Mammary epithelial cell (primary cell): ENCODE measurements at regions of chr2 and their contacts with region 1.

Region 1: DNA sequence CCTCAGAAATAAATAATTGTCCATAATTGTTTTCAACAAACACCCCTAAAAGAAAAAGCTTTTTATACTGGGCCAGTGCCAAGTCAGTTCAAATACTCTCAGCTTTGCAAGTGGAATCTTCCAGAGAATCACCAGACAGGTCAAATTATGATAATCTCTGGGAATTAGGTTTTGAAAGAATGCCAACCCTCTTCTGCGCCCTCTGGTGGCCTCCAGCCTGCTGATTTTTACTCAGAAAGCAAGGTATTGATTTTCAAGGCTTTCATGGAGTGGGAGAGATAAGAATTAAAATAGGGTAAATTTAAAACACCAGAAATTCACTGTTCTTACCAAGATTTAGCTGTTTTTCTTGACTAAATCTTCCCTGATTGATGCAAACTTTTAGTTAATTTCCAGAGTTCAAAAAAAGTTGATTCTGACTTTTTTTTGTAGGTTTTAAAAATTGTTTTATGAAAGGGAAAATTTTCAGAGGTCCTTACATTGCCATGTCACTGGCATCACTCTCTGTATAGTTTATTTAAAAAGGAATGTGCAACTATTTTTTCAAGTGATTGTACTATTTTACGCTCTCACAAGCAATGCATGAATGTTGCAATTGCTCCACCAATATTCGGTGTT is 282.9 kb upstream of the TNP1 start:
- DNase-seq: peak; percentile 17
- H3K4me3 ChIP-seq: no peak overlapping the region
- H3K27ac ChIP-seq: no peak overlapping the region
- H3K4me1 ChIP-seq: no peaks in the 10 kb centered on the region
- H3K27me3 ChIP-seq: no peaks in the 10 kb centered on the region
- CTCF ChIP-seq: peak; percentile 78 to 81

Region 2: DNA sequence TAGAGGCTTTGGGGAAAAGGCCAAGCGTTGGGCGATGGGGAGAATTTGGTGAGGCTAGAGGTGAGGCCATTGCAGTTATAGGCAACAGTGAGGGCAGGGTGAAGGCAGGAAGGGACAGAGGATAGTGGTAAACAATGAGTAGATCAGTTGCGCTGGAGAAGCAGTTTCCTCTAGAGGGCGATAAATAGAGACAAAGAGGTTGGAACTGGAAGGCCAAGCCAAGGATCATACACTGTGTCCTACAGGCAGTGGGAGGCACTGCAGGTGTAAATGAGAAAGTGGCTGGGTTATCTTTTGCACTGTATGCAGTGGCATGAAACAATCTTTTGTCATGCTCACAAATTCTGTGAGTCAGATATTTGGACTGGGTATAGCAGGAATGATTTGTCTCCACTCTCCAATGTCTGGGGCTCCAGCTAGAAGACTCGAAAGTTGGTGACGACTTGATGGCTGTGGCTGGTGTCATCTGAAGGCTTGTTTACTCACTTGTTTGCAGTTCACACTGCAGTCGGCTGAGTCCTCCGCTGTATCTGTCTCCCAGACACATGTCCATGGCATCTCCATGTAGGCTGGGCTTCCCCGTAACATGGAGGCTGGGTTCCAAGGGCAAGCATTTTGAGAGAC is 365.0 kb before region 1 on chr2:
- CTCF ChIA-PET with region 1: no interaction called
- dilution Hi-C with region 1: no loop called
- in situ Hi-C with region 1: no loop called
- intact Hi-C with region 1: loop called (anchors 1 kb)
- DNase-seq: peak; percentile 76
- H3K4me3 ChIP-seq: no peak overlapping the region
- H3K27ac ChIP-seq: no peak overlapping the region
- H3K4me1 ChIP-seq: peaks cover 13% of the 10 kb centered on the region
- H3K27me3 ChIP-seq: no peaks in the 10 kb centered on the region
- CTCF ChIP-seq: peak; percentile 96 to 97

Region 3: GRCh38 chr2:217054791-217055190 is 88.0 kb before region 1 on chr2:
- CTCF ChIA-PET with region 1: no interaction called
- dilution Hi-C with region 1: no loop called
- in situ Hi-C with region 1: no loop called
- intact Hi-C with region 1: loop called (anchors 5 kb)
- DNase-seq: no peak
- H3K4me3 ChIP-seq: no peak overlapping the region
- H3K27ac ChIP-seq: no peak overlapping the region
- H3K4me1 ChIP-seq: no peaks in the 10 kb centered on the region
- H3K27me3 ChIP-seq: no peaks in the 10 kb centered on the region
- CTCF ChIP-seq: no peak

Region 4: GRCh38 chr2:217248312-217248935 is 105.7 kb after region 1 on chr2:
- CTCF ChIA-PET with region 1: no interaction called
- dilution Hi-C with region 1: no loop called
- in situ Hi-C with region 1: no loop called
- intact Hi-C with region 1: no loop called
- DNase-seq: no peak
- H3K4me3 ChIP-seq: no peak overlapping the region
- H3K27ac ChIP-seq: no peak overlapping the region
- H3K4me1 ChIP-seq: no peaks in the 10 kb centered on the region
- H3K27me3 ChIP-seq: no peaks in the 10 kb centered on the region
- CTCF ChIP-seq: no peak